ENCODE measurements at regions of chr9 and their contacts with region 1.

Region 1: GRCh38 chr9:136849038-136849959 is at the start of gene PHPT1:
- DNase-seq: peak; percentile 99
- ATAC-seq: peak; percentile 85 to 91 (median 88)
- H3K4me3 ChIP-seq: peak within 1 kb of the TSS; percentile 81
- H3K27ac ChIP-seq: peak within 1 kb of the TSS; percentile 91
- H3K4me1 ChIP-seq: peaks cover 26% of the 10 kb centered on the region
- H3K27me3 ChIP-seq: peaks cover 0 to 20% (median 8%) of the 10 kb centered on the region in 3 donors
- CTCF ChIP-seq: no peak
- total RNA-seq, gene PHPT1: 154 to 272 (median 220) TPM

Region 2: GRCh38 chr9:137029058-137029936 is 180.0 kb after region 1 on chr9:
- intact Hi-C with region 1: loop called (anchors 5 to 10 kb)
- DNase-seq: peak; percentile 85 to 88
- ATAC-seq: peak; percentile 74 to 88 (median 80)
- H3K4me3 ChIP-seq: peak overlapping the region; percentile 72
- H3K27ac ChIP-seq: no peak overlapping the region
- H3K4me1 ChIP-seq: peaks cover 21% of the 10 kb centered on the region
- H3K27me3 ChIP-seq: no peaks in the 10 kb centered on the region
- CTCF ChIP-seq: peak; percentile 83